PC-3 (cell line): ENCODE measurements at regions of chr13 and their contacts with region 1.

Region 1: DNA sequence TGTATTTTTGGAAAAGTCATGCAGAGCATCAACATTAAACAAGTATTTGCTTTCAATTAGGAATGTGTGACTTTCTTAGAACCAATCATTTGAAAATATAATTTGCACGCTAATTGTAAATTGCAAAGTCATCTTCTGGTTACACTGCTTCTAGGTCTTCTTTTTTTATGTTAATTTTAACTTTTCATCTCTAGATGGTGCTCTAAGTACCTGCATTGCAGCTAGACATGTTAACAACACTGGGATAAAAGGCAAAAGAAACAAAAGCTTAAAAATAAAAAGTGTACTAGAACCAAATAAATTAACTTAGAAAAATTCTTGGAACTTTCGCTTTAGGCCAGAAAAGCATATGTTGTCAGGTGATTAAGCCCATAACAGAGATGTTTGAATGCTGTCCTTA is 2758.2 kb downstream of the PCDH9 start:
- DNase-seq: peak; percentile 48
- ATAC-seq: peak; percentile 37; the same call in 1 of the 2 replicates
- H3K4me3 ChIP-seq: no peak overlapping the region
- H3K27ac ChIP-seq: no peak overlapping the region
- H3K4me1 ChIP-seq: no peaks in the 10 kb centered on the region
- H3K27me3 ChIP-seq: no peaks in the 10 kb centered on the region
- CTCF ChIP-seq: peak; percentile 68

Region 2: GRCh38 chr13:64099994-64100393 is 371.9 kb before region 1 on chr13:
- CTCF ChIA-PET with region 1: no interaction called
- POLR2A ChIA-PET with region 1: interaction called, 11 read pairs
- intact Hi-C with region 1: no loop called
- DNase-seq: no peak
- ATAC-seq: no peak
- H3K4me3 ChIP-seq: no peak overlapping the region
- H3K27ac ChIP-seq: no peak overlapping the region
- H3K4me1 ChIP-seq: no peaks in the 10 kb centered on the region
- H3K27me3 ChIP-seq: no peaks in the 10 kb centered on the region
- CTCF ChIP-seq: no peak

Region 3: GRCh38 chr13:64154514-64154913 is 317.4 kb before region 1 on chr13:
- CTCF ChIA-PET with region 1: no interaction called
- POLR2A ChIA-PET with region 1: no interaction called
- intact Hi-C with region 1: loop called (anchors 5 kb)
- DNase-seq: peak; percentile 28
- ATAC-seq: no peak
- H3K4me3 ChIP-seq: no peak overlapping the region
- H3K27ac ChIP-seq: no peak overlapping the region
- H3K4me1 ChIP-seq: peaks cover 4% of the 10 kb centered on the region; the same call in 1 of the 2 replicates
- H3K27me3 ChIP-seq: no peaks in the 10 kb centered on the region
- CTCF ChIP-seq: peak; percentile 53

Region 4: DNA sequence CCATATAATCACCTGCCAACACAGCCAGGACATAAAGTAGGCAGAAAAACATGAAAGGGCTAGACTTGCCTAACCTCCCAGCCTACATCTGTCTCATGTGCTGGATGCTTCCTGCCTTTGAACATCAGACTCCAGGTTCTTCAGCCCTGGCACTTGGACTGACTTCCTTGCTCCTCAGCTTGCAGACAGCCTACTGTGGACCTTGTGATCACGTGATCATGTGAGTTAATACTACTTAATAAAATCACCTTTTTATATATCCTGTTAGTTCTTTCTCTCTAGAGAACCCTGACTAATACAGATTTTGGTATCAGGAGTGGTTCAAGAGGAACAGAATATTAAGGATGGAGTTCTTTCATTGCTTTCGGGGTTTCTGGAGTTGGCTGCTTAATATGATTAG is 109.4 kb before region 1 on chr13:
- CTCF ChIA-PET with region 1: no interaction called
- POLR2A ChIA-PET with region 1: no interaction called
- intact Hi-C with region 1: no loop called
- DNase-seq: no peak
- ATAC-seq: no peak
- H3K4me3 ChIP-seq: no peak overlapping the region
- H3K27ac ChIP-seq: no peak overlapping the region
- H3K4me1 ChIP-seq: no peaks in the 10 kb centered on the region
- H3K27me3 ChIP-seq: no peaks in the 10 kb centered on the region
- CTCF ChIP-seq: no peak

Region 5: GRCh38 chr13:64819081-64819480 is 347.2 kb after region 1 on chr13:
- CTCF ChIA-PET with region 1: no interaction called
- POLR2A ChIA-PET with region 1: no interaction called
- intact Hi-C with region 1: loop called (anchors 5 kb)
- DNase-seq: no peak
- ATAC-seq: no peak
- H3K4me3 ChIP-seq: no peak overlapping the region
- H3K27ac ChIP-seq: no peak overlapping the region
- H3K4me1 ChIP-seq: peaks cover 6% of the 10 kb centered on the region
- H3K27me3 ChIP-seq: no peaks in the 10 kb centered on the region
- CTCF ChIP-seq: peak; percentile 34; the same call in 1 of the 2 replicates

Region 6: GRCh38 chr13:65638572-65639168 is 1166.8 kb after region 1 on chr13:
- CTCF ChIA-PET with region 1: no interaction called
- POLR2A ChIA-PET with region 1: no interaction called
- intact Hi-C with region 1: loop called (anchors 1 kb)
- DNase-seq: peak; percentile 56
- ATAC-seq: peak; percentile 31; the same call in 1 of the 2 replicates
- H3K4me3 ChIP-seq: no peak overlapping the region
- H3K27ac ChIP-seq: no peak overlapping the region
- H3K4me1 ChIP-seq: no peaks in the 10 kb centered on the region
- H3K27me3 ChIP-seq: no peaks in the 10 kb centered on the region
- CTCF ChIP-seq: peak; percentile 75